AG04450 (cell line): ENCODE measurements at regions of chr10 and their contacts with region 1.

Region 1: DNA sequence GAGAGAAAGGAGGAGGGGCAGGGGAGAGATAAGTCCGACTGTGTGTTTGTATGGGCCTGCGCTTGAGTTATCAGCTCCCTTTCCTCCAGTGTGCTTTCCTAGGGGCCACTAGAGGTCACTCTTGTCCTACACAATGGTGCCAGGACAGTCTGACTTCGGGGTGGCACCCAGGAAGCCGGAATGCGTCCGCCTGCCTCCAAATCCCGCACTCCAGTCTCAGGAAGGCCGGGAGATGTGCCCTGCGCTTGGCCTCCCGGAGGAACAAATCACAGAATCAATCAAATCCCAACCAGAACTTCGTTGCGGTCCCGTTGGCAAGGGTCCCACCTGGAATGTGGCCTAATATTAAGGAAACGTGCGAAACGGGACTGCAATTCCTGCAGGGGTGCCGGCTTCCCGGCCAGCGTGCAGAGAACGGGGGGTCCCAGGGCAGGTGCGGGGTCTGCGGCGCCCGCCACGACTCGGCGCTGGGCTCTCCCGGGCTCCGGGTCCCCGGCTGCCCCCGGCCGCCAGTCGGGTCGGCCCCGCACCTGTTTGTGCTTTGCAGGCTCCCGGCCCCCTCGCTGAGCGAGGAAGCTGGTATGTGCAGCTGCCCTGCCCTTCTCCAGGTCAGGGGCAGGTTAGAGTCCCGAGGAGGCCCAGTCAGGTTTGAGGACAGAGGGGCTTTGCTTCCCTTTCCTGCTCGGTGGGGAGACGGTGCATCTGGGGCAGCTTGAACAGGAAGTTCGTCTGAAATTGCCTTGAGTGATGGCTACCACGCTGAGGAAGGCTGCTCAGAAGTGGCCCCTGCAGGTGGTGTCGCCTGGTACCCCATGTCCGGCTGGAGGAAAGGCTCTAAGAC is 21.0 kb upstream of the HPS1 start:
- DNase-seq: peak; percentile 63
- H3K4me3 ChIP-seq: peak overlapping the region; percentile 53
- H3K27ac ChIP-seq: no peak overlapping the region
- H3K27me3 ChIP-seq: peaks cover 13% of the 10 kb centered on the region
- CTCF ChIP-seq: peak; percentile 85

Region 2: DNA sequence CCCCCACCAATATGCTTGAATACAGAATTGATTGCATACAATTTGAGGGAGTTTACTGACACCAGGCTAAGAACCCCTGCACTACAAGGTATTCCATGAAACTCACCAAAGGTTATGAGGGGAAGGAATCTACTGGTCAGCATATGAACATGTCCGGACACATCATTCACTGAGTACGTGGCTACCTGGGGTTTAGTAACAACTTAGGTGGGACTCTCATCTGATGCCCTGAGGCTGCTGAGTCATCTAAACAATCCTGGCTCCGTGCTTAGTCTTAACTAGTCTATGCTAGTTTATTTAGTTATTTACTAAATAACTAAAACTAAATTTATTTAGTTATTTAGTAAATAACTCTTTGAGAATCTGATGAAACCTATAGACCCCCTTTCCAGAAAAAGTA is 816.0 kb before region 1 on chr10:
- CTCF ChIA-PET with region 1: no interaction called
- POLR2A ChIA-PET with region 1: no interaction called
- DNase-seq: no peak
- H3K4me3 ChIP-seq: no peak overlapping the region
- H3K27ac ChIP-seq: no peak overlapping the region
- H3K27me3 ChIP-seq: no peaks in the 10 kb centered on the region
- CTCF ChIP-seq: no peak

Region 3: DNA sequence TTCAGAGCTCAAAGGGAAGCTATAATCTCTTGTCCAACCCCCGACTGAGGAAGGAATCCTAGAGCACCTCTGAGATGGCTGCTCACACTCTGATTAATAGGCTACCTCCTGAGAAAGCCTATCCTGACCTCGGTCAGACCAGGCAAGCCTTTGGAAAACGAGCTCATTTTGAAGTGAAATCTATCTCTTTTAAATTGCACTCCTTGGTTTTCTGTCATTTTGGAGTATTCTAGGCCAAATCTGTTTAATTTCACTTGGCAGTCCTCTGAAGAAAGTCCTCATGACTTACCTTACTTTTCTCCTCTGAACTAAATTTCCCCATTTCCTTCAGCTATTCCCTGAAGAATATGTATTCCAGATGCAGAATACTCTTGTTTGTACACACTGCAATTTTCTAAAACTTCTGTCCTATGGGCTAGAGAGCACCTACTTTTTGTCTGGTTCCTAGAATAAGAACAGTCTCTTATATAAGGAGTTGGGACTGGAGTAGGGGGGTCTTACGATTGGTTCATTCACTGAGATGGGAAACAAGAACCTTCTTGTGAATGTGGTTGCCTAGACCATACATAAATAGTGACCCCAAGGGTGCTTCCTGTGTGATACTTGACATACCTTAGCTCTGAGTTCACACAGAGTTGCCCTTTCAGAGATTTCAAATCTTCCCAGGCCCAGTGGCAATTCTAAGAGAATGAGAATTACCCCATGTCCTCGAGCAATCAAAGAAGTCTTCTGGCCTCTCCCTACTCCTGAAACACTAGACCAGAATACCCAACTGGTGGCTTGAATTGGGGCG is 10.9 kb after region 1 on chr10:
- CTCF ChIA-PET with region 1: interaction called, 11 read pairs
- POLR2A ChIA-PET with region 1: no interaction called
- DNase-seq: no peak
- H3K4me3 ChIP-seq: no peak overlapping the region
- H3K27ac ChIP-seq: no peak overlapping the region
- H3K27me3 ChIP-seq: peaks cover 5% of the 10 kb centered on the region
- CTCF ChIP-seq: no peak

Region 4: GRCh38 chr10:98664331-98665042 is 196.8 kb after region 1 on chr10:
- CTCF ChIA-PET with region 1: interaction called, 22 read pairs
- POLR2A ChIA-PET with region 1: no interaction called
- DNase-seq: no peak
- H3K4me3 ChIP-seq: no peak overlapping the region
- H3K27ac ChIP-seq: no peak overlapping the region
- H3K27me3 ChIP-seq: no peaks in the 10 kb centered on the region
- CTCF ChIP-seq: peak; percentile 57

Region 5: GRCh38 chr10:99172130-99172738 is 704.5 kb after region 1 on chr10:
- CTCF ChIA-PET with region 1: interaction called, 13 read pairs
- POLR2A ChIA-PET with region 1: no interaction called
- DNase-seq: peak; percentile 10
- H3K4me3 ChIP-seq: no peak overlapping the region
- H3K27ac ChIP-seq: no peak overlapping the region
- H3K27me3 ChIP-seq: no peaks in the 10 kb centered on the region
- CTCF ChIP-seq: peak; percentile 79

Region 6: GRCh38 chr10:99248824-99249223 is 781.1 kb after region 1 on chr10:
- CTCF ChIA-PET with region 1: interaction called, 62 read pairs
- POLR2A ChIA-PET with region 1: no interaction called
- DNase-seq: no peak
- H3K4me3 ChIP-seq: no peak overlapping the region
- H3K27ac ChIP-seq: no peak overlapping the region
- H3K27me3 ChIP-seq: no peaks in the 10 kb centered on the region
- CTCF ChIP-seq: no peak